ENCODE measurements at regions of chr5 and their contacts with region 1.

Region 1: GRCh38 chr5:543825-544674 is 19.8 kb upstream of the SLC9A3 start:
- DNase-seq: peak; percentile 68
- ATAC-seq: peak; percentile 84
- H3K4me3 Mint-ChIP-seq: peak overlapping the region; percentile 68
- H3K27ac Mint-ChIP-seq: peak overlapping the region; percentile 83
- H3K4me1 Mint-ChIP-seq: peaks cover 10% of the 10 kb centered on the region
- H3K27me3 Mint-ChIP-seq: peaks cover under 1% of the 10 kb centered on the region

Region 2: GRCh38 chr5:472656-473553 is 71.1 kb before region 1 on chr5:
- POLR2A ChIA-PET with region 1: interaction called, 10 read pairs
- DNase-seq: peak; percentile 96
- ATAC-seq: peak; percentile 80
- H3K4me3 Mint-ChIP-seq: peak overlapping the region; percentile 81
- H3K27ac Mint-ChIP-seq: peak overlapping the region; percentile 78
- H3K4me1 Mint-ChIP-seq: peaks cover 10% of the 10 kb centered on the region
- H3K27me3 Mint-ChIP-seq: peaks cover 6% of the 10 kb centered on the region

Region 3: DNA sequence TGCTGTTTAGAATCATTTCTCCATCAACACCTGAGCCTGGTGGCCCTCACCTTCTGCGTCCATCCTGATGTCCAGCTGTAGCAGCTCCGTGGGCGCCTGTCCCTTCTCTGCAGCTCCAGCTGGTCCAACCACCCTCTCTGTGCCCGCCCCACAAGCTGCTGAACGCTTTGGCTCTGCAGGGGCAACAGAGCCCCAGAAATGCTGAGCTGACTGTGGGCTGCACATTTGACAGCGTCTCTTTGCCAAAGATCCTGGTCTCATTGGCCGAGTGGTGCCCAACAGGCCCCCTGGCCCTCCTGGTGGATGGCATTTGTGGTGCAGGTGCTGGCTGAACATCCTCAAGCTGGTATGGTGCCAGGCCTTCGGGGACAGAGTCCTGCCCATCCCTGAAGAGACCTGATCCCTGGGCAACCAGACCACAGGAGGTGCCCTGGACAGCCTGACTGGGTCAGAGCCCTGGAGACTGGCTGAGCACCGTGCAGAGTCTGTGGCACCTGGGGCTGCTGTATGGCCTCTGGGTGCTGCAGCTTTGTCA is 42.8 kb after region 1 on chr5:
- POLR2A ChIA-PET with region 1: no interaction called
- DNase-seq: no peak
- ATAC-seq: no peak
- H3K4me3 Mint-ChIP-seq: no peak overlapping the region
- H3K27ac Mint-ChIP-seq: no peak overlapping the region
- H3K4me1 Mint-ChIP-seq: peaks cover 4% of the 10 kb centered on the region
- H3K27me3 Mint-ChIP-seq: peaks cover 29% of the 10 kb centered on the region